ENCODE measurements at regions of chr3 and their contacts with region 1.

Region 1: GRCh38 chr3:115147329-115148141 is 447 bp upstream of the ZBTB20 start:
- DNase-seq: peak; percentile 81
- ATAC-seq: peak; percentile 77
- H3K4me3 Mint-ChIP-seq: peak overlapping the region; percentile 94
- H3K27ac Mint-ChIP-seq: peak overlapping the region; percentile 98
- H3K4me1 Mint-ChIP-seq: peaks cover 34% of the 10 kb centered on the region
- H3K27me3 Mint-ChIP-seq: no peaks in the 10 kb centered on the region
- CTCF ChIP-seq: no peak

Region 2: DNA sequence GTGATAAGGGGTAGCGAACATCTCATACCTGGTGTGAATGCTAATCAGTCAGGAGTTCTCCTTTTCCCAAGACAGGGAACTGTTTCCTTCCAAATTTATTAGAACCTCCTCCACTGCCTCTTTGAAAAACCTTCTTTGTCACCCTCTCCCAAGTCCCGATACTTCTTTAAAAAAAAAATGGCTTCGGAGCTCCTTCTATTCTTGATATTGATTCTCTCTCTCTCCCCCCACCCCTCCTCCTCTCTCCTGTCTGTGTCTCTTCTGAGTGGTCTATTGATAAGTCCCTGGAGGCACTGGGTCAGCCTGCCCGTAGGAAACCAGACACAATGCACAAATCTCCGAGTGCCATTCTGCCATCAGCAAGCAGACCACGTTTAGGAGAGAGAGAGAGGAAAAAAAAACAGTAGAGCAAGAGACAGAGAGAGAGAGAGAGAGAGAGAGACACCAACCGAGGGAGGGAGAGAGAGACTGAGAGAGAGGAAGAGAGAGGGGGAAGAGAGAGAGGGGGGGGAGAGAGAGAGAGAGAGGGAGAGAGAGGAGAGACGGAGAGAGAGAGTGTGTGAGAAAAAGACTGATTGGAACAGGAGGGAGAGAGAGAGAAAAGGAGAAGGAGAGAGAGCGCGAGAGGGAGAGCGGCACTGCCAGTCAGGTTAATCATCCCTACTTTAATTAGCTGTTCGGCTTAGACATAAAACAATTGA is 692.8 kb before region 1 on chr3:
- CTCF ChIA-PET with region 1: no interaction called
- POLR2A ChIA-PET with region 1: interaction called, 4 read pairs
- intact Hi-C with region 1: loop called (anchors 1 kb)
- DNase-seq: no peak
- ATAC-seq: peak; percentile 43
- H3K4me3 Mint-ChIP-seq: no peak overlapping the region
- H3K27ac Mint-ChIP-seq: no peak overlapping the region
- H3K4me1 Mint-ChIP-seq: peaks cover 52% of the 10 kb centered on the region
- H3K27me3 Mint-ChIP-seq: no peaks in the 10 kb centered on the region
- CTCF ChIP-seq: no peak

Region 3: DNA sequence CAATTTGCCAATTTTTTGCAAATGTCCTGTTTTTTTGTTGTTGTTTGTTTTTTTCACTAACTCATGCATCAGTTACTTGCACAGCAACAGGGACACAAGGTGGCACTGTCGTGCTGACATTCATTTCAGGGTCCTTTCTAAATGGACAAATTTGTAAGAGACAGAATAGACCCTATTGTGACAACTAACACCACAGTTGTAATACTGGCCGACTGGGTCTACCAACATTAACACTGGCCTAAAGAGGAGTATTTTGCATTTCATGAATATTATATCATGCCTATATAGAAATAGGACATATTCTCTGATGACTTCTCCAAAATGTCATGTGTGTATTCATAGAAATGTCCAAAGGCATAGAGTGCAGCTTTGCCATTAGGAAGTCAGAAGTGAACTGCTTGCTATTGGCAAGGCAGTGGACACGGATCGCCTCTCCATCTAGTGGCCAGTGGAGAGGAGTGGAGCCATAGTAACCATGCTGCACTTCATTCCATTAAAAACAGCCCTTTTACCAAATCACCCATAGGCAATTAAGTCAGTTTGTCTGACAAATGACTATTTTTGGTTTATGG is 55.2 kb before region 1 on chr3:
- CTCF ChIA-PET with region 1: interaction called, 3 read pairs
- POLR2A ChIA-PET with region 1: interaction called, 4 read pairs
- intact Hi-C with region 1: loop called (anchors 2 kb)
- DNase-seq: no peak
- ATAC-seq: peak; percentile 45
- H3K4me3 Mint-ChIP-seq: no peak overlapping the region
- H3K27ac Mint-ChIP-seq: no peak overlapping the region
- H3K4me1 Mint-ChIP-seq: peaks cover 5% of the 10 kb centered on the region
- H3K27me3 Mint-ChIP-seq: no peaks in the 10 kb centered on the region
- CTCF ChIP-seq: no peak

Region 4: DNA sequence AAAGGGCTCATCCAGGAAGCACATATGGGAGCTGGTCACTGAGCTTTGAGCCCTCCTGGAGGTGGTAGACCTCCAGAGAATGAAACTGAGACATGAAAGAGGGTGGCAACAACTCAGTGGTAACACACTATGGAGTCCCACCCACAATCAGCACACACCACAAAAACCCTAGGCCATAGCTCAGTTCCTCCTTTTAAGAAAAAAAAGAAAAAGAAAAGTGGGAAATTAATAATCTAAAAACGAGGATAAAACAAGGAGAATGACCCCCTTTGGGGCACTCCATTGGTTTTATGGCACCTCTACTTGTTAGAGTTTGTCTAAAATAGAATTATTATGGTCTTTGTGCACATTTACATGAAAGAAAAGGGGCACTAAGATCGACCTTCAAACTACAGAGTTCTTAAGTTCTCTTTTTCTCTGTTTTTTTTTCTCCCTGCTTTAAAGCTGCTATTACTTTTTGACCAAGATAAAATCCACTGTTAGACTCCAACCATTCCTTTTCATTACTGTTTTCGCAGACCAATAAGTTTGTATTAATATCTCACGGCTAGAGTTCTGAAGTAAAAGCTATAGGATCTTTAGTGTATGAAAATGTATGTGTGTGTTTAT is 39.7 kb after region 1 on chr3:
- CTCF ChIA-PET with region 1: interaction called, 3 read pairs
- POLR2A ChIA-PET with region 1: interaction called, 37 read pairs
- intact Hi-C with region 1: loop called (anchors 1 kb)
- DNase-seq: no peak
- ATAC-seq: peak; percentile 99
- H3K4me3 Mint-ChIP-seq: peak overlapping the region; percentile 76
- H3K27ac Mint-ChIP-seq: peak overlapping the region; percentile 95
- H3K4me1 Mint-ChIP-seq: peaks cover 26% of the 10 kb centered on the region
- H3K27me3 Mint-ChIP-seq: no peaks in the 10 kb centered on the region
- CTCF ChIP-seq: no peak

Measured in activated B cell treated with CpG ODN at 0.5 μM for 24 hours (primary cell).